Right cardiac atrium (tissue), 5 donors: ENCODE measurements at regions of chr12 and their contacts with region 1.

Region 1: DNA sequence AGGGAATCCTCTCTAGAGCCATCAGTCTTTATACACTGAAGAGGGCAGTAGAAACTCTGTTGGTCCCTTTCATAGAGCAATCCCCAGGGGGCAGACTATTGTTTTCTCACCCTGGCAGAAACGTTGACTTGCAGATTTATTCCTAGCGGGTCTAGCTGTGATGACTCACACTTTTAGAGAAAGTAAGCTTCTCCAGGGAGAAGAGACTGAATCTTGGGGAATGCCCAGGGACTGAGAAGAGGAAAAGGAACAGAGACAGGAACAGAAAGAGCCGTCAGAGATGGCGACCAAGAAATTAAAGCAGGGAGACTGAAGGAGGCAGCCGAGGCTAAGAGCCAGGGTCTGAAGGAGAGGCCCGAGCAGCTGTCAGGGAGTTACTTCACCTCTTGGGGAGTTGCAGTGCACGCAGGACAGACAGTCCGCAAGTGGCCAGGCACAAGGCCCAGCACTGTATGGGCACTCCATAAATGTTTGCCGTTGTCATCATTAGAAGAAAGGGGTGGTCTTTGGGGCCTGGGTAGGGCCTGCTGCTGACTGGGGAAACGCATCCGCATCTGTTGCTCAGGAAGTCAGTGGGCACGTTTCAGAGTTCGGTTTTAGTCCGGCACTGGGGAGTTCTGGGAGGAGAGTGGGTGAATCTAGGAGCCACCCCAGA is 13.0 kb downstream of the PLEKHG6 start:
- DNase-seq: peak in 1 of 3 donors; percentile 79
- ATAC-seq: peak; percentile 48 to 60
- H3K4me3 ChIP-seq: no peak overlapping the region
- H3K27ac ChIP-seq: peak overlapping the region; percentile 95
- H3K4me1 ChIP-seq: peaks cover 14% of the 10 kb centered on the region
- H3K27me3 ChIP-seq: no peaks in the 10 kb centered on the region

Region 2: GRCh38 chr12:6392504-6393077 is 69.1 kb after region 1 on chr12:
- intact Hi-C with region 1: no loop called
- DNase-seq: peak; percentile 47 to 77 (median 76)
- ATAC-seq: peak; percentile 67 to 82
- H3K4me3 ChIP-seq: no peak overlapping the region
- H3K27ac ChIP-seq: peak overlapping the region; percentile 40
- H3K4me1 ChIP-seq: no peaks in the 10 kb centered on the region
- H3K27me3 ChIP-seq: no peaks in the 10 kb centered on the region

Region 3: GRCh38 chr12:6465467-6466183 is 142.2 kb after region 1 on chr12:
- intact Hi-C with region 1: loop called in 3 of 4 experiments (anchors 5 to 10 kb)
- DNase-seq: no peak
- ATAC-seq: peak; percentile 32 to 34
- H3K4me3 ChIP-seq: no peak overlapping the region
- H3K27ac ChIP-seq: no peak overlapping the region
- H3K4me1 ChIP-seq: peaks cover 4% of the 10 kb centered on the region
- H3K27me3 ChIP-seq: no peaks in the 10 kb centered on the region

Region 4: DNA sequence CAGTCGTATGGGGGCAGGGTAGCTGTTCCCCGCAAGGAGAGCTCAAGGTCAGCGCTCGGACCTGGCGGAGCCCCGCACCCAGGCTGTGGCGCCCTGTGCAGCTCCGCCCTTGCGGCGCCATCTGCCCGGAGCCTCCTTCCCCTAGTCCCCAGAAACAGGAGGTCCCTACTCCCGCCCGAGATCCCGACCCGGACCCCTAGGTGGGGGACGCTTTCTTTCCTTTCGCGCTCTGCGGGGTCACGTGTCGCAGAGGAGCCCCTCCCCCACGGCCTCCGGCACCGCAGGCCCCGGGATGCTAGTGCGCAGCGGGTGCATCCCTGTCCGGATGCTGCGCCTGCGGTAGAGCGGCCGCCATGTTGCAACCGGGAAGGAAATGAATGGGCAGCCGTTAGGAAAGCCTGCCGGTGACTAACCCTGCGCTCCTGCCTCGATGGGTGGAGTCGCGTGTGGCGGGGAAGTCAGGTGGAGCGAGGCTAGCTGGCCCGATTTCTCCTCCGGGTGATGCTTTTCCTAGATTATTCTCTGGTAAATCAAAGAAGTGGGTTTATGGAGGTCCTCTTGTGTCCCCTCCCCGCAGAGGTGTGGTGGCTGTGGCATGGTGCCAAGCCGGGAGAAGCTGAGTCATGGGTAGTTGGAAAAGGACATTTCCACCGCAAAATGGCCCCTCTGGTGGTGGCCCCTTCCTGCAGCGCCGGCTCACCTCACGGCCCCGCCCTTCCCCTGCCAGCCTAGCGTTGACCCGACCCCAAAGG is 211.7 kb after region 1 on chr12:
- intact Hi-C with region 1: loop called in 1 of 4 experiments (anchors 5 kb)
- DNase-seq: peak; percentile 88 to 90 (median 89)
- ATAC-seq: peak; percentile 15 to 55
- H3K4me3 ChIP-seq: peak overlapping the region; percentile 71
- H3K27ac ChIP-seq: peak overlapping the region; percentile 97
- H3K4me1 ChIP-seq: peaks cover 7% of the 10 kb centered on the region
- H3K27me3 ChIP-seq: no peaks in the 10 kb centered on the region

Region 5: DNA sequence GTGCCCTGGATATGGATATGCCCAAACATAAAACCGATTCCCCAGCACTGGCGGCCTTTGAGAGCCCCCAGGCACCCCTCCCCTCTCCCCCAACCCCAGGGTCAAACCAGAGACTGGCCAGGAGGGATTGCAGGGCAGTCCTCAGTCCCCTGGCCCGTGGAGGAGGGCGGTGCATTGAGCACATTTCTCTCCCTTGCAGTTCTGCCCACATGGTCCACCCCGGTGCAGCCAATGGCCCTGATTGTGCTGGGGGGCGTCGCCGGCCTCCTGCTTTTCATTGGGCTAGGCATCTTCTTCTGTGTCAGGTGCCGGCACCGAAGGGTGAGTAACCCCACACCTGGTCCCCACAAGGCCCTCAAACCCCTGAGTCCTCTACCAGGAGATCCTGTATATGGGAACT is 494.8 kb after region 1 on chr12:
- intact Hi-C with region 1: no loop called
- DNase-seq: peak in 1 of 3 donors; percentile 43
- ATAC-seq: no peak
- H3K4me3 ChIP-seq: no peak overlapping the region
- H3K27ac ChIP-seq: no peak overlapping the region
- H3K4me1 ChIP-seq: no peaks in the 10 kb centered on the region
- H3K27me3 ChIP-seq: no peaks in the 10 kb centered on the region